Head of caudate nucleus (tissue), 42 donors: ENCODE measurements at regions of chr3 and their contacts with region 1.

Region 1: DNA sequence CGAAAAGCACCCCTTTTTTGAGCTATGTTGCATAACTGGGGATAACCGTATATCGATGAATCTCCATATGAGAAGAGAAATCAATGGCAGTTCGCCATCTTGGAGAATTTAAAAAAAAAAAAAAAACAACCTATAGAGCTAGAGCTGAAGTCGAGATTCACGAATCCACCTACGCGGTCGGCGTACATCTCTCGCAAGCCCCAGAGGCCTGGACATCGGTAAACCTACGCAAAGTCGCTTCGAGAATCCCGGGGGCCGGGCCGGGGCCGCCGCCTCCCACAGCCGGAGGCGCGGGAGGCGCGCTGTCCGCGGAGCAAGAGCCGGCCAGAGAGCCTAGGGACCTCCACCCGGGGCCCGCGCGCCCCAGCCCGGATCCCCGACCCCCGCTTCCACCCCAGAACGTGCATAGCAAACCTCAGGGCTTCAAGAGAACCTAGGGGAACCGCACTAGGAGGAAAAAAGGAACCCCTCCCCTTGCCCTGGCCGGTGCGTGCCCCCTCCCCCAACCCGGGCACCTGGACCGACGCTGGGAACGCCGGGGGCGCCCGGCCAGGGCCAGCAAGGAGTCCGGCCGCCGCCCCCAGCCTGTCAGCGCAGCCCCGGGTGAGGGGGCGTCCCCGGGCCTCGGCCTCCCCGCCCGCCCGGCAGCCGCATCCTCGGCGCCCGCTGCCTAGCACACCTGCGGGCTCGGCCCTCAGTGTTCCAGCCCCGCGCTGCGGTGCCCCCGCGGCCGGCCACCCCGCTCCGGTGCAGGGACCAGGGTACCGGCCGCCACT is 567 bp downstream of the PFN2 start:
- DNase-seq: peak; percentile 63 to 92 (median 80)

Region 2: DNA sequence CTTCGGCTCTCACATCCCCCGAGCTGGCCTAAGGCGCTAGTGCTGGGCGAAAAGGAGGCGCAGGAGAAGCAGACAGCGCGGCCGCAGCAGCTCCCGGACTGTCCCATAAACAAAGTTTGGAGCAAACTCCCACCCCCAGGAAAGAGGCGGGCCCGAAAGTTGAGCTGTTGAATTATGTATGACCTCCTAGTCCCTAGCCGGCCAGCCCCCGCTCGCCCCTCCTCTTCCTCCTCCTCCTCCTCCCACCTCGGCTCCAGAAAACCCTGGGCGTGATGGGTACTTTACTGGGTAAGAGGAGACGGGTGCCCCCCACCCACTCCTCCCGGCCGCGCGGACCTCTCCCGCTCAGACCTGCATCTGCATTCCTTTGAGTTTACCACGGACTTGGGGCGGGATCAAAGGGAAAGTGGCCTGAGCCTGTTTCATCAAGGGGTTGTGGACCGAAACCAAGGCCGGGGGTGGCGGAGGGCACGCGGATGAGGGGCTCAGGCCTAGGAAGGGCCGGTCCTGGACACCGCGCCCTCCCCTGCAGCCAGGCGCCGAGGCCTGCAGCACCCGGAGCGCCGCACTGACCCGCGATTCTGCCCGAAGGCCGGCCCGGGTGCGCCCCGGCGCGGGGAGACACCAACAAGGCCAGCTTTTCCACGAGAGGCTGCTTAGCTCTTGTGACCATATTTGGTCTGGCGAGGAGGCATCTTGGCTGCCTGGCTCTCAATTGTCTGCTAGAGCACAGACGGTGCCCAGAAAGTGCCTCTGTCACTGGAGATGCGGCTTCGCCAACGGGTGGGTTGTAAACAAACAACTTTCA is 312.0 kb before region 1 on chr3 and contains the start of gene WWTR1:
- intact Hi-C with region 1: no loop called
- DNase-seq: peak; percentile 65 to 93 (median 82)

Region 3: DNA sequence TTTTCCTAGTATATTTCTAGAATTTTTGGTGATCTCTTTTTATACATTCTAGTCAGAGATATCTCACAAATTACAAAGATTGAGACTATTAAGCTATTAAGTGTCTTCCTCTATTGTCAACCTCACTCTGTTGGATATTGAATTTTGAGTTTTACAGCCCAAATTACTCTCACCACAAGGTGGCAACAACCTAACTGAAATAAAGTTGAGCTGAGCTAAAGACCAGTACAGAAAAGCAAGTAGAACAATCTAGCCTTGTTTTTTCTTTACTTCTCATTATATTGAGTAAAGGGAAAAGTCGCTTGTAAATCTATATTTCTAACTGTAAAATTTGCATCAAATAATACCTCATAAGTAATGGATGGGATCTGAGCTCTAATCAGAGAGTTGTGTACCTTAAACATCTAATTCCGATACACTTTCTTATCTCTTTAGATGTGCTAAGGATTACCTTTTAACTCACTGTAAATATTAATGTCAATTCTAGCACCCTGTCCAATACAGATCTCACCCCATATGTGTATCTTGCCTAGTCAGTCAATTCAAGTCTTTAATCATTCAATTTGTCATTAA is 204.3 kb before region 1 on chr3:
- intact Hi-C with region 1: loop called (anchors 10 kb)
- DNase-seq: peak in 12 of 42 donors; percentile 17 to 78 (median 46)

Region 4: GRCh38 chr3:149812606-149813366 is 157.3 kb before region 1 on chr3 and contains the start of gene RNF13:
- intact Hi-C with region 1: loop called (anchors 10 kb)
- DNase-seq: peak; percentile 97 to 100 (median 99)

Region 5: GRCh38 chr3:149879872-149880271 is 90.3 kb before region 1 on chr3:
- intact Hi-C with region 1: loop called (anchors 10 kb)
- DNase-seq: peak; percentile 47 to 90 (median 77)

Region 6: DNA sequence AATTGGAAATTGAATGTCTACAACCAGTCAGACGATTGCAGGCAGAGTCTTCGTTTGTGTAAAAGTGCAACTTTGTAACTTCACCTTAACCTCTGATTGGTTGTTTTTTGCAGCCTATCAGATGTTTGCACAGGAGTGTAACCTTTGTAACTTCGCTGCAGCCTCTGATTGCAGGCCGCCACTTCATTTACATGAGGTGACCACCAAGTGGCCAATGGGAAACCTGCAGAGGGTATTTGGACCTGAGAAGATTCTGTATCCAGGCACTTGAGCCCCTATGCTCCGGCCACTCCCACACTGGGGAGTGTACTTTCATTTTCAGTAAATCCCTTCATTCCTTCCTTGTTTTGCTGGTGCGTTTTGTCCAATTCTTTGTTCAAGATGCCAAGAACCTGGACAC is 68.7 kb after region 1 on chr3:
- intact Hi-C with region 1: no loop called
- DNase-seq: no peak

Region 7: DNA sequence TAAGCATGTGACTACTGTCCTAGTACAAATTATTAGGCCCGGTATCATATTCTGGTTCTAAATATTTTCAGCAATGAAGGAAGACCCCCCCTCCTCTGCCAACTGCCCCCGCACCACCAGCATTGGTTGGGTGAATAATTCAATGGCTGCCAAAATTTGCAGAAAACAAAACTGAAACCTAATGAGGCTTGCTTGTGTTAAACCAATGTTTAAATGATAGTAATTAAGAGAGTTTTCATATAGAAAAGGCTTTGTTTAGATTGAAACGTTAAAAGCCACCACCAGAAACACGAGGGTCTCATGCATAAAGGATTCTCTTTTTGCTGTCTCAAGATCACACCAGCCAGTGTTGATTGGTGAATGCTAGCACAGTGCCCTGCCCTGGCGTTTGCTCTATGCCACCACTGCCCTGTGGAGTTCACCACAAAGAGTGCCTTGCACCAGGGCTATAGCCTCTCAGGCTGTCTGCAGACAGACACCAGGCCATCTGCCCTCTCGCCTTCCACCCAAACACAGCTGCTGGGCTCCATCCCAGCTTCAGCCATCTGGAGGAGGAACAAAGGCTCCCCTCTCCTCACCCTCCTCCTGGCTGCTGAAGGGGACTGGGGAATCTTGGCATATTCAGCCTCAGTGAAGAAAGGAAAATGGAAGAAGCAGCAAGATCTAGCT is 200.9 kb after region 1 on chr3:
- intact Hi-C with region 1: no loop called
- DNase-seq: peak; percentile 68 to 94 (median 88)

Region 8: DNA sequence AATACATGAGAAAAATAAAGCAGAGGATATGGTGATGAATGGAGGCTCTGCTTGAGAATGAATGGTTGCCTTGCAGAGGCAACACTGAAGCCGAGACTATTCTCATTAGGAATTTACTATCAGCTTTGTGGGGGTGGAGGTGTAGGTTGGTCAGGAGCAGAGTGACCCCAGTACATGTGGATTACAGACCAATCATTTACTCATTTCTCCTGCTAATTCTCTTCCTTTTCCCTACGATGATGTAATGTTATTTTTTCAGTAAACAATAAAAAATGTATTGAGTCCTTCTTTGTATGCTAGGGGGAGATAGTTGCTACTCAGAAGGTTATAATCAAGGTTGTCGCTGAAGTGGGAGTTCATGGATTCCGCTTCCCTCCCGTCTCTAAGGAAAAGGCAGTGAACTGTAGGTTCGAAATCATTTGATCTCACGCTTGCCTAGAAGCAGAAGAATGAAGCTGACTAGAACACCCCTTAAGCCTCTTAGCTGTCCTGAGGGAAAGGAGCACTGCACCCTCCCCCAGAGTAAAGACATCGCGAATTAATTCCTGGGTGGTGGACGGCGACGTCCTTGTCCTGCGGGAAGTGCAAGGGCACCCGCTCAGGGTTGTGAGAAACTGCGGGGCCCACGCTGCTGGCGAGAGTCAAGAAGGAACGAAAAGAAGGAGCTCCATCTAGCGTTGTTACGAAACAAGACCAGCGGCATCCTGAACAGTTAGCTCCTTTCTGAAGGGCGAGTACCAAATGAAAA is 213.7 kb after region 1 on chr3:
- intact Hi-C with region 1: loop called (anchors 5 kb)
- DNase-seq: peak; percentile 61 to 95 (median 83)